ENCODE measurements at regions of chr9 and their contacts with region 1.

Region 1: GRCh38 chr9:385818-386398 is 171.2 kb downstream of the DOCK8 start:
- DNase-seq: no peak
- H3K4me3 ChIP-seq: no peak overlapping the region
- H3K27ac ChIP-seq: no peak overlapping the region
- H3K4me1 ChIP-seq: no peaks in the 10 kb centered on the region
- H3K27me3 ChIP-seq: no peaks in the 10 kb centered on the region
- CTCF ChIP-seq: peak in 7 of 11 experiments; percentile 14 to 49 (median 40)
- POLR2A ChIP-seq: no peak

Region 2: DNA sequence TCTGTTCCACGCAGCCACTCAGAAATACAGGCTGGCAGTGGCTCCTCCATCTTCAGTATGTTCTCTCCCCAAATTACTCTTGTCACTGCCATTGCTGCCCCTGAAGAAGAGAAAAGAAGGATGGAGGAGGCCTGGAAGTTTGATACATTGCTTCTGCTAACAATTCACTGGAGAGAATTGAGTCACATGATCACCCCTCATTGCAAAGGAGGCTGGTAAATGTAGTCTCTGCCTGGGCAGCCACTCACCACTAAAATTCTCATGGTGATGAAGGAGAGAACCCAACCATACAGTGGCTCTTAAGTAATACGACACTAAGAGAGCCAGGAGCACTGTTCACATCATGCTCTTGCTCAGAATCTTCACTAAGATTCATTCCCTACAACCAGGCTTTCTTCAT is 59.2 kb before region 1 on chr9:
- intact Hi-C with region 1: loop called (anchors 10 kb)
- DNase-seq: no peak
- H3K4me3 ChIP-seq: no peak overlapping the region
- H3K27ac ChIP-seq: no peak overlapping the region
- H3K4me1 ChIP-seq: no peaks in the 10 kb centered on the region
- H3K27me3 ChIP-seq: no peaks in the 10 kb centered on the region
- CTCF ChIP-seq: no peak
- POLR2A ChIP-seq: no peak